Panc1 (cell line): ENCODE measurements at regions of chr17 and their contacts with region 1.

Region 1: DNA sequence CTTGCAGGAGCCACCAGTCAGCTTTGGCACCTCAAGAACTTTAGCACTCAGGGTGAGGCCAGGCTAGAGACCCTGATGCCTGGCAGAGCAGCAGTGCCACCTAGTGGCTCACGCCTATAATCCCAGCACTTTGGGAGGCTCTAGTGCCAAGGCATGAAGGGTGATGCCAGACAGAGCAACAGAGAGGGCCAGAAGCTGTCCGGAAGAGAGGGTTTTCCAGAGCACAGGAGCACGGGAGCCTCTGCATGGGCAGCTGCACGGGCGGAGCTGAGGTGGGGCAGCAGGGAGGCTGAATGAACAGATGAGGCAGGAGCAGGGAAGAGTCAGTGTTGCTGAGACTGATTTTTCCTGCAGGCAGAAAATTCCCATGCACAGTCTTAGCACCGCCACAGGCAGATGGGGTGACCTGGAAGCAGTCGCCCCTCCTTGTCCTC is 38.9 kb downstream of the MYH3 start:
- DNase-seq: peak; percentile 74
- ATAC-seq: peak; percentile 95
- H3K4me3 ChIP-seq: no peak overlapping the region
- H3K27ac ChIP-seq: no peak overlapping the region
- H3K4me1 ChIP-seq: no peaks in the 10 kb centered on the region
- H3K27me3 ChIP-seq: no peaks in the 10 kb centered on the region
- CTCF ChIP-seq: peak; percentile 95

Region 2: DNA sequence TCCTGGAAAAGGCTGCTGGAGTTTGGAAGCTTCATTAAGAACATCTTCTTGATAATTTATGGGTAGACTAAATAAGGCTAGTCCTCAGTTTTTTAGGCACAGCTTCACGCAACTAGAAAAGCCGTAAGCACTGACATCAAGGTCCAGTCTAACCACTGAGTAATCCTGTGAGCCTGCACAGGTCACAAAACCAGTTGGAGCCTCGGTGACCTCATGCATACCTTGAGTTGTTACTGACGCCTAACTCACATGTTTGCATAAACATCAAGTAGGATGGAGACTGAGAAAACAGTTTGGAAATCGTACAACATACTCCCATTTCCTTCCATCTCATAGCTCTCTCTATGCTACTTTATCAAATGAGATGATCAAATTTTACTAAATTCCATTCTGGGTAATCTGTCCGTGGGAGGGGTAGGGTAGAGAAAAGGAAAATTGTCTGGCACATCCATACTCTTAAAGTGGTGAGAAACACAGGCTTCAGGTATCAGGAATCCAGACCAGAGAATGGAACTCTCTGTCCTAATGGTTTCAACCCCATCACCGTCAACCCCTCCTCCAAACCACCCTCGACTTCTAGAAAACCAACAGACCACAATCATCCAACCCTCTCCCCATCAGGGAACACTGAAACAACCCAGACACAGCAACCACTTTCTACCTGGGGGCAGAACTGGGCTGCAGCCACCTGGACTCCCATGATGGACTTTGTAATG is 649.2 kb before region 1 on chr17:
- CTCF ChIA-PET with region 1: no interaction called
- POLR2A ChIA-PET with region 1: no interaction called
- in situ Hi-C with region 1: no loop called
- intact Hi-C with region 1: loop called (anchors 5 kb)
- DNase-seq: no peak
- ATAC-seq: no peak
- H3K4me3 ChIP-seq: no peak overlapping the region
- H3K27ac ChIP-seq: no peak overlapping the region
- H3K4me1 ChIP-seq: no peaks in the 10 kb centered on the region
- H3K27me3 ChIP-seq: no peaks in the 10 kb centered on the region
- CTCF ChIP-seq: no peak

Region 3: GRCh38 chr17:10295728-10296343 is 322.4 kb before region 1 on chr17:
- CTCF ChIA-PET with region 1: interaction called, 4 read pairs
- POLR2A ChIA-PET with region 1: no interaction called
- in situ Hi-C with region 1: no loop called
- intact Hi-C with region 1: loop called (anchors 10 kb)
- DNase-seq: peak; percentile 22
- ATAC-seq: no peak; the same call in 1 of the 2 replicates
- H3K4me3 ChIP-seq: no peak overlapping the region
- H3K27ac ChIP-seq: no peak overlapping the region
- H3K4me1 ChIP-seq: no peaks in the 10 kb centered on the region
- H3K27me3 ChIP-seq: no peaks in the 10 kb centered on the region; the same call in 1 of the 2 replicates
- CTCF ChIP-seq: peak; percentile 75

Region 4: DNA sequence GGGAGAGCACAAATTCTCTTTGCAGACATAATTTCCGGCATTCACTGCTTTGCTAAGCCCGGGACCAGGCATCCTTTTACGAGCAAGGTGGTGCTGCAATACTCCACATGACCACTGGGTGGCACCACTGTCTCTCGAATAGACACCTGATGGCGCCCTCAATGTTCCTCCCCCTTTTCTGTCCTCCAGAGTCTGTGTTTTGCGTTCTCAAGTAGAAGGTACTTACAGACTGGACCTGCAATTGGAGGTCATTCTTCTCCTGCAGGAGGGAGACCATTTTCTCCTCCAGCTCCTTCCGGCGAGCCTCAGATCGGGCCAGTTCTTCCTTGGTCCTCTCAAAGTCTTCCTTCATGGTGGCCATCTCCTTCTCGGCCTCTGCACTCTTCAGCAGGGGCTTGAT is 290.6 kb before region 1 on chr17:
- CTCF ChIA-PET with region 1: interaction called, 7 read pairs
- POLR2A ChIA-PET with region 1: interaction called, 6 read pairs
- in situ Hi-C with region 1: no loop called
- intact Hi-C with region 1: loop called (anchors 1 kb)
- DNase-seq: peak; percentile 64
- ATAC-seq: peak; percentile 74
- H3K4me3 ChIP-seq: no peak overlapping the region
- H3K27ac ChIP-seq: no peak overlapping the region
- H3K4me1 ChIP-seq: no peaks in the 10 kb centered on the region
- H3K27me3 ChIP-seq: no peaks in the 10 kb centered on the region
- CTCF ChIP-seq: peak; percentile 87

Region 5: GRCh38 chr17:10516065-10516464 is 102.2 kb before region 1 on chr17:
- CTCF ChIA-PET with region 1: no interaction called
- POLR2A ChIA-PET with region 1: no interaction called
- in situ Hi-C with region 1: no loop called
- intact Hi-C with region 1: no loop called
- DNase-seq: no peak
- ATAC-seq: no peak
- H3K4me3 ChIP-seq: no peak overlapping the region
- H3K27ac ChIP-seq: no peak overlapping the region
- H3K4me1 ChIP-seq: no peaks in the 10 kb centered on the region
- H3K27me3 ChIP-seq: no peaks in the 10 kb centered on the region
- CTCF ChIP-seq: no peak

Region 6: GRCh38 chr17:10563991-10564660 is 54.1 kb before region 1 on chr17:
- CTCF ChIA-PET with region 1: no interaction called
- POLR2A ChIA-PET with region 1: no interaction called
- in situ Hi-C with region 1: no loop called
- intact Hi-C with region 1: no loop called
- DNase-seq: no peak
- ATAC-seq: no peak
- H3K4me3 ChIP-seq: no peak overlapping the region
- H3K27ac ChIP-seq: no peak overlapping the region
- H3K4me1 ChIP-seq: no peaks in the 10 kb centered on the region
- H3K27me3 ChIP-seq: no peaks in the 10 kb centered on the region
- CTCF ChIP-seq: no peak

Region 7: GRCh38 chr17:11130368-11130767 is 512.1 kb after region 1 on chr17:
- CTCF ChIA-PET with region 1: no interaction called
- POLR2A ChIA-PET with region 1: no interaction called
- in situ Hi-C with region 1: no loop called
- intact Hi-C with region 1: no loop called
- DNase-seq: no peak
- ATAC-seq: no peak
- H3K4me3 ChIP-seq: no peak overlapping the region
- H3K27ac ChIP-seq: no peak overlapping the region
- H3K4me1 ChIP-seq: no peaks in the 10 kb centered on the region
- H3K27me3 ChIP-seq: no peaks in the 10 kb centered on the region
- CTCF ChIP-seq: no peak